ENCODE measurements at regions of chr5 and their contacts with region 1.

Region 1: GRCh38 chr5:168486136-168486879 is at the start of gene RARS1:
- DNase-seq: peak; percentile 95 to 97 (median 97)
- ATAC-seq: peak; percentile 99
- H3K4me3 ChIP-seq: peak within 1 kb of the TSS; percentile 91
- H3K27ac ChIP-seq: no peak within 1 kb of the TSS
- H3K4me1 ChIP-seq: no peaks in the 10 kb centered on the region
- H3K27me3 ChIP-seq: no peaks in the 10 kb centered on the region
- total RNA-seq, gene RARS1: 47.1 to 54.3 (median 50.9) TPM

Region 2: DNA sequence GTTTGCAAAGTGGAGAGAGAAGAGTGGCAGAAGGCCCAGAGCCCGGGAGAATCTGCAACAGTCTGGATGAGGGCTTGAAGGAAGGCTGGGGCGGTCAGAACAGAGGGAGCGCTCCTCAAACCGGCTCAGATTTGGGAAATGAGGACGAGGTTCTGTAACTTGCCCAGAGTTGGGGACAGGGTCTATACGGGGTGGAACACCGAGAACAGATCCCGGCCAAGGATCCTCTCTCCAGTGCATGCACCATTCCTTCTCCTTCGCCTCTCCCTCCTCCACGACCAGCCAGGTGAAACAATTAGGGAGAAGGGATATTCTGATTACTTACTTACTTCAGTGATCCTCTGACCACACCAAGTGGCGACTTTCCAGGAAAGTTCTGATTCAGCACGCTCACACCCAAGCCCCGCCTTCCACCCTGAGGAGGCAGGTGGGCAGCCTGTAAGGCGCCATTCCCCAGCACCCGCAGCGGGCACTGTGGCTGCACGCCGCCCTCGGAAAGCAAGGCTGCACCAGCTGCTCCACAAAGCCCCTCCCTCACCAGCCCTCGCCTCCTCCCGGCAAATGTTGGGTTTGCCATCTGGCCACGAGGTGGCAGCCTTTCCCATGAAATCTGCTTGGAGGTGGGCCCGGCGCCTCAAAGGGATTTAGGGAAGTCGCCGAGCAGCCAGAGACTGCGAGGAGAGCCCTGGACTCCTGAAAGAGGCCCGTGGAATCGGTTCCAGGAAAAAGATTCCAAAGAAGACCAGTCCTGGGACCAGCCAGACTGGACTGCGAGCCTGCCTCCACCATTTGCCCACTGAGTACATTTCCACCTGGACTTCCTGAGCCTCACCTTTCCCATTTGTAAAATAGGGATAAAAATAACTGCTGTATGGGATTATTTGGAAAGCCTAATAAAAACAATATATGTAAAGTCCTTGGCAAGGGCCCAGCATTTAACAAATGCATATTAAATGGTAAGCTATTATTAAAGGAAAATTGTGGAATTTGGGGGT is 217.1 kb before region 1 on chr5:
- intact Hi-C with region 1: loop called (anchors 5 to 10 kb)
- DNase-seq: peak; percentile 86 to 93 (median 92)
- ATAC-seq: peak; percentile 92 to 93
- H3K4me3 ChIP-seq: no peak overlapping the region
- H3K27ac ChIP-seq: no peak overlapping the region
- H3K4me1 ChIP-seq: no peaks in the 10 kb centered on the region
- H3K27me3 ChIP-seq: no peaks in the 10 kb centered on the region

Measured in right cardiac atrium (tissue), 5 donors.